GM12878 (cell line): ENCODE measurements at regions of chr1 and their contacts with region 1.

Region 1: DNA sequence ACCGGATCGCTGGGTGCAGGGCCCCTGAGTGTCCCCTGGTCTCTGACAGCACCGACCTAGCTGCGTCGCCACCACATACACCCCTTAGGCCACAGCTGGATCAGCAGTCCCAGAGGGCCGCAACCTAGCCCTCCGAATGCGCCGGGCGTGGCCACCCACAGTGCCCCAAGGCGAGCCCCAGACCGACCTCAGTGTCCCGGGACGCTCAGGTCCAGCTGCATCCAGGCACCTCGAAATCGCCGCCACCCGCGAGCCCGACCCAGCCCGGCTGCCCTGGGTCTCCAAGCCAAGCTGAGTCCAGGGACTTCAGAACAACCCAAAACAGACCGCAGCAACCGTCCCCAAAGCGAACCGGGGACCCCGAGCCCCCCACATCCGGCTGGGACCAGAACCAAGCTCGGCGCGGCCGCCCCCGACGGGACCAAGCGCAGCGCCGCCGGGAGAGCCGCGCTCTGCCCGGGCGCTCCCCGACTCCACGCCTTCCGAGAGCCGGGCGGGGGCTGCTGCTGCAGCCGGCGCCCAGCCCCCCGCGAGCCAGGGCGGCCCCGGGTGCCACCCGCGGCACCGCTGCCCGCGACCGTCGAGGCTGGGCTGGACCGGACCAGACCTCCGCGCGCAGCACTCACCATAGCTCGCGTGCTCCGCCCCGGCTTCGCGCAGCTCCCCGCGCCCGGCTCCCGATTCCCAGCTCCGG is 54.6 kb upstream of the ECE1 start:
- DNase-seq: no peak
- ATAC-seq: peak; percentile 19
- H3K4me3 ChIP-seq: peak overlapping the region; percentile 98
- H3K27ac ChIP-seq: peak overlapping the region; percentile 43; the same call in 1 of the 2 replicates
- H3K4me1 ChIP-seq: peaks cover 34% of the 10 kb centered on the region
- H3K27me3 ChIP-seq: peaks cover 0 to 2% of the 10 kb centered on the region in 2 experiments; a peak in 1 of 4 replicates
- CTCF ChIP-seq: no peak
- EP300 ChIP-seq: no peak
- POLR2A ChIP-seq: no peak
- RAD21 ChIP-seq: no peak

Region 2: DNA sequence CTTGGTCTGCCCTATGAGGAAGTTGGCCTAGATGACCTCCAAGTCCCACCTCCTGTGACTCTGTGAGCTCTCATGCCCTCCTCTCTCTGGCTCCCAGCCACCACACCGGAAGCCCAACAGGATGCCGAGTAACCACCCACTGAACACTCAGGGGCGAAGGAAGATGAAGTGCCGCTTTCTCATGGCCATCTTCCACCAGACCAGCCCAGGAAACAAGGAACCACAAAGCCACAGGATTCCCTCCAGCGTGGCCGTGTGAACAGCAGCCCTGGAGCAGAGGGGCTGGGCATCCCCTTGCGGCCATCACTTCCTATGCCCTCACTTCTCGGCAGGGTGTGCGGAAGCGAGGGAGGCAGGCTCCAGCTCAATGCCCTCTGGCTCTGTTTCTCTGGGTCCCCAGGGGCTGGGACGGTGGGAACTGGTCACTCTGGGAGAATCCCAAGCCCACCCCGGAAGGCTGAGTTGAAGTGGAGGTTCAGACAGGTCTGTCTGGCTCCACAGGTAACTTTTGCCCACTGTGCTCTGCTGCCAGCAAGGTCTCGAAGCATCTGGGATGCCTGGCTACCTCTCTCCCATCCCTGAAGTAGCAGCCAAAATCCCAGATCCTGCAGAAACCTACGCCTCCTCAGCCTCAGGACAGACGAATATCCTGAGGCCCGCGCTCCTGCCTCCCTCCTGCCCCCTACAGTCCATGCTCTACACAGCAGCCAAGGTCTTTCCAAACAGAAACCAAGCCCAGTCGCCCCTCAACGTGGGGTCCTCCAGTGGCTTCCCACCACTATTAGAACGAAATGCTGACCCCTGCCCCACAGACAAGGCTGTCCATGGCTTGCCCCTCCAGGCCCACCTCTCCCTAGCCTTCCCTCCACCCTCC is 10.4 kb before region 1 on chr1:
- CTCF ChIA-PET with region 1: interaction called, 29 read pairs
- POLR2A ChIA-PET with region 1: interaction called, 32 read pairs
- RAD21 ChIA-PET with region 1: interaction called, 14 read pairs
- SMC1A ChIA-PET with region 1: interaction called, 8 read pairs
- in situ Hi-C with region 1: no loop called
- intact Hi-C with region 1: loop called (anchors 1 kb)
- DNase-seq: peak; percentile 91
- ATAC-seq: peak; percentile 92
- H3K4me3 ChIP-seq: peak overlapping the region; percentile 55; the same call in 1 of the 2 replicates
- H3K27ac ChIP-seq: peak overlapping the region; percentile 87
- H3K4me1 ChIP-seq: peaks cover 46% of the 10 kb centered on the region
- H3K27me3 ChIP-seq: no peaks in the 10 kb centered on the region
- CTCF ChIP-seq: peak; percentile 72 to 87 (median 76)
- EP300 ChIP-seq: peak in 1 of 2 experiments; percentile 11; a peak in 1 of 4 replicates
- POLR2A ChIP-seq: peak; percentile 56
- RAD21 ChIP-seq: peak; percentile 63